ENCODE measurements at regions of chr12 and their contacts with region 1.

Region 1: DNA sequence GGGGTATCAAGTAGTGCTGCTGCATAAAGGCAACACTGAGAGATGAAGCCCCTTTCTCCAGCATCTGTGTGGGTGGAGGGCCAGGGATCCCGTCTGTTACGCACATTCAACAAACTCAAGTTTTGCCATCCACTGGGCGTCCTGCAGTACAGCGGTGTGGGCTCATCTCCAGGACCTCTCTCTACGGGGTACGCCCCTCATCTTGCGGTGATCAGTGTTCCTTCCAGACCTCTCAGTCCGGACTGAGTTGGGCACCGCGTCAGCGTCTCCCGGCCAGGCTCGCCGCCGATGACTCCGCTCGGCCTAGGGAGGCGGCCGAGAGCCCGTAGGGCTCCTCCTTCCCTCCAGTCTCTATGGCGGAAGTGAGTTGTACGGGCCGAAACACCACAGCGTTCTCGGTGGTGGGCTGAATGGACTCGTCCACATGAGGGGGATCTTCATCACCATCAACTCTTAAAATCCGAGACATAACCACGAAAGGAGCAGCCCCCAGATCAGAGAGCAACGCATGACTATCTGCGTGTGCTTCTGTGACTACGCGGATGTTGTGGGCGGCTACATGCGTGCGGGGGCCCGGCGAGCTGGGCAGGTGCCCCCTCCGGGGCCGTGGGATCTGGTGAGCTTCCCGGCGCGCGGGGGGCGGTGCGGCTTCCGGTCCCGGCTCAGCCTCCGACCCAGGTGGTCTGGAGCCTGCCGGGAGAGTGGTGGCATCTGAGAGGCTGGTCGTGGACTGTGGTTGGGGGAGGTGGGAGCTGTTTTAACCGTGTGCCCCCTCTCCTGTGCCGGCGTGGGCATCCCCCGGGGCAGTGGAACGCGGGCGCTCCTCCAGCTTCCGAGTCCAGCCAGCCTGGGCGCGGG is at the start of gene ATG101:
- DNase-seq: peak; percentile 73
- ATAC-seq: peak; percentile 93
- H3K4me3 ChIP-seq: peak within 1 kb of the TSS; percentile 98
- H3K27ac ChIP-seq: peak within 1 kb of the TSS; percentile 95
- H3K4me1 ChIP-seq: peaks cover 13% of the 10 kb centered on the region
- H3K27me3 ChIP-seq: no peaks in the 10 kb centered on the region; a peak in 1 of 4 replicates
- CTCF ChIP-seq: peak; percentile 91 to 96 (median 95)
- EP300 ChIP-seq: peak; percentile 52 to 56; a peak in 2 of 4 replicates
- POLR2A ChIP-seq: peak; percentile 94
- RAD21 ChIP-seq: no peak; the same call in 1 of the 2 replicates
- polyA plus RNA-seq, gene ATG101: 2.7 to 5.6 TPM

Region 2: DNA sequence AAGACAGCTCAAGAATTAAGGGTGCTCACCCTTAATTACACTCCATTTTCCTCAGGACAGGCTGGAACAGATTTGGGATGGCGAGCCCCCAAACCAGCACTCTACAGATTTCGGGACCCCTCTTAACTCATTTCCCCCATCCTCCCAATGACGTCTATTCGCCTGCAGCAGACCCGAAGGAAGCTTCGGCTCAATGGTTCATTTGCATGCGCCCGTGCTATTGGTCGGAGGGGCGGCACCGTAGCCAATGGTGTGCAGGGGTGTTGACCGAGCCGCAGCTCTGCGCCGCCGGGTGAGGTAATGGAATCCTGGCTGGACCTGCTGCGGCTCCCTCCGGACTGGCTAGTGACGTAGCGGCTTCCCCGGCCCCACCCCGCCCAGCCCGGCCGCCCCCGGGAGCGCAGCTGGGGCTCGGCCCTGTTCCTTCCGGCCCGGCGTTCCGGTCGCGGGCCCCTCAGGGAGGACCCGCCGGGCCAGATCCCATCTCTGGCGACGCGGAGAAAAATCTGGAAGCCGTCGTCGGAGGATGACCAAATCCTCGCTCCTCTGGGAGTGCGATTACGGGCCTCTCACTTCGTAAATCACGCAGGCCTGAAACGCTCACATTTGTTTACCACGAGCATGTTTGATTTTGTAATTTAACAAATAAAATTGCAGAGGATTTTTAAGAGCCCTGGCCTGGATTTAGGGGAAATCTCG is 36.6 kb before region 1 on chr12:
- CTCF ChIA-PET with region 1: interaction called, 208 read pairs
- POLR2A ChIA-PET with region 1: interaction called, 6 read pairs
- RAD21 ChIA-PET with region 1: interaction called, 17 read pairs
- SMC1A ChIA-PET with region 1: interaction called, 20 read pairs
- in situ Hi-C with region 1: no loop called
- intact Hi-C with region 1: no loop called
- DNase-seq: peak; percentile 55
- ATAC-seq: peak; percentile 94
- H3K4me3 ChIP-seq: peak overlapping the region; percentile 51; the same call in 1 of the 2 replicates
- H3K27ac ChIP-seq: no peak overlapping the region
- H3K4me1 ChIP-seq: peaks cover 17% of the 10 kb centered on the region
- H3K27me3 ChIP-seq: no peaks in the 10 kb centered on the region; a peak in 1 of 4 replicates
- CTCF ChIP-seq: no peak
- EP300 ChIP-seq: no peak
- POLR2A ChIP-seq: peak; percentile 62
- RAD21 ChIP-seq: no peak

Region 3: DNA sequence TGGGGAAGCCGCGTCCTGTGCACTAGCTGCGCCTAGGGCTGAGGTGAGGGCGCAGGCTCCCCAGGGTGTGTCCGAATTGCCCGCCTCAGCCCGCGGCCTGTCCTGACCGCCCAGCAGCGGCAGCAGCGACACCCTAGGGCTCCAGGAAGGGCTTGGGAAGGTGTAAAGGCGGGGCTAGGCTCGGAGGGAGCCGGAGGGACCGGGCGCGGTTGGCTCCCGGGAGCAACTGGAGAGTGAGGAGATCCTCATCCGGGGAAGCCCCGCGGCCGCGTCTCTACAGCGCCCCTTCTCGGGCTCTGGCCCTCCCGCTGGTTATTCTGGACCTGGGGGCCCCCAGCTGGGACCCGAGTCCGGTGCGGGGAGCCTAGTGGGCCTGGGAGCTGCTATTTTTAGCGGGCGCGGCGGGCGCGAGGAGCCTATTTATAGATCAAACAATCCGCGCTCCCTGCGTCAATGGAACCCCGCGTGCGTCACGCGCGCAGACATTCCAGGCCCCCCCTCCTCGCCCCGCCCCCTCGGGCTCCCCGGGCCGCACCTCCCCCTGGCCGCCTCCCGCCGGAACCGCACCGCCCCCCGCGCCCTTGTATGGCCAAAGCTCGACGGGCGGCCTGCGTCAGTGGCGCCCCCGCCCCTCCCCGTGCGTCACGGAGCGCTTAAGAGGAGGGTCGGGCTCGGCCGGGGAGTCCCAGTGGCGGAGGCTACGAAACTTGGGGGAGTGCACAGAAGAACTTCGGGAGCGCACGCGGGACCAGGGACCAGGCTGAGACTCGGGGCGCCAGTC is 18.6 kb before region 1 on chr12 and contains the start of gene NR4A1:
- CTCF ChIA-PET with region 1: interaction called, 34 read pairs
- POLR2A ChIA-PET with region 1: interaction called, 21 read pairs
- RAD21 ChIA-PET with region 1: interaction called, 8 read pairs
- SMC1A ChIA-PET with region 1: interaction called, 4 read pairs
- in situ Hi-C with region 1: no loop called
- intact Hi-C with region 1: loop called (anchors 1 kb)
- DNase-seq: peak; percentile 49
- ATAC-seq: peak; percentile 85
- H3K4me3 ChIP-seq: peak within 1 kb of the TSS; percentile 76
- H3K27ac ChIP-seq: peak within 1 kb of the TSS; percentile 67
- H3K4me1 ChIP-seq: peaks cover 18% of the 10 kb centered on the region
- H3K27me3 ChIP-seq: no peaks in the 10 kb centered on the region
- CTCF ChIP-seq: peak in 2 of 3 experiments; percentile 5 to 31; a peak in 2 of 6 replicates
- EP300 ChIP-seq: peak; percentile 87 to 88
- POLR2A ChIP-seq: peak; percentile 85
- RAD21 ChIP-seq: no peak
- polyA plus RNA-seq, gene NR4A1: 0.05 TPM in 1 of 2 experiments, not detected in the other

Region 4: DNA sequence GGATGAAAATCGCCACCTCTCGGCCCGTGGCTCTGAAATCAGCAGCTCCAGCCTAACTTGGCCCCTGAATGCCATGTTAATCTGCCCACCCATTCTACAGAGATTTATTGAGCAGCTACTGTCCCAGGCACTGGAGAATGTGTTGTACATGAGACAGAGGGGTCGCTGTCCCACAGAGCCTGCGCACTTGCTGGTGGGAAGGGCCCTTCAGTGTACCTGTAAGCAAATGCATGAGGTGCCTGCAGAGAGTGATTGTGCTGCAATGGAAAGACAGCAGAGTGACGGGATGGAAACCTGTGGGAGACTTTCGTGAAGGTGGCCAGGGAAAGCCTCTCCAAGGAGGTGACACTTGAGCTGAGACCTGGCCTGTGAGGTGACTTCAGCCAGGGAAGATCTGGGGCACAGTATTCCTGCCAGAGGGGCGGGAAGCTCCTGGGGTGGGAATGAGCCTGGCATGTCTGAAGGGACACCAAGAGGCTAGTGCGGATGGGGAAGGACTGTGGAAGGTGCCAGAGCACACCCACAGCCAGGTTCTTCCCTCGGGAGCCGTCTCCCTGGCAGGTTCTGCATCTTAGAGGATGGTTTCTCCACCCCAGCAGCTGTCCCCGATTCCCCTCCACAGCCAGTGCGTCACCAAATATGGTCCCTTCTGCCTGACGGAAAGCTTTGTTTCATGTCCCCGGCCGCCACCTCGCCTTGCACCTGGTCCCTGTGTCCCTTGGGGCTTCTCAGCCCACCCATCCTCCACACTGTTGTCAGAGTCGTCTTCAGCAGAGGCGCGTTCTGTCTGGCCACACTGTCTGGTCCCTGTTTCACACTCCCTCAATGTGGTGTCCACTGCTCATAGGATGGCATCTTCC is 18.6 kb after region 1 on chr12:
- CTCF ChIA-PET with region 1: interaction called, 55 read pairs
- POLR2A ChIA-PET with region 1: interaction called, 6 read pairs
- RAD21 ChIA-PET with region 1: interaction called, 28 read pairs
- SMC1A ChIA-PET with region 1: interaction called, 36 read pairs
- in situ Hi-C with region 1: no loop called
- intact Hi-C with region 1: no loop called
- DNase-seq: no peak
- ATAC-seq: peak; percentile 86
- H3K4me3 ChIP-seq: no peak overlapping the region
- H3K27ac ChIP-seq: no peak overlapping the region
- H3K4me1 ChIP-seq: peaks cover 8% of the 10 kb centered on the region
- H3K27me3 ChIP-seq: no peaks in the 10 kb centered on the region; a peak in 1 of 4 replicates
- CTCF ChIP-seq: no peak
- EP300 ChIP-seq: peak in 1 of 2 experiments; percentile 36; a peak in 2 of 4 replicates
- POLR2A ChIP-seq: no peak
- RAD21 ChIP-seq: no peak

Measured in GM12878 (cell line).